Activated naive CD4-positive, alpha-beta T cell treated with anti-CD3 and anti-CD28 coated beads for 36 hours (primary cell): ENCODE measurements at regions of chr11 and their contacts with region 1.

Region 1: GRCh38 chr11:11841723-11842420 is at the start of gene USP47:
- DNase-seq: peak; percentile 94
- H3K4me3 Mint-ChIP-seq: no peak within 1 kb of the TSS
- H3K27ac Mint-ChIP-seq: no peak within 1 kb of the TSS
- H3K4me1 Mint-ChIP-seq: peaks cover 2% of the 10 kb centered on the region
- H3K27me3 Mint-ChIP-seq: peaks cover 5% of the 10 kb centered on the region
- total RNA-seq, gene USP47: 52.4 to 56.0 TPM

Region 2: GRCh38 chr11:10455637-10456487 is 1386.0 kb before region 1 on chr11:
- CTCF ChIA-PET with region 1: no interaction called
- intact Hi-C with region 1: loop called (anchors 5 kb)
- DNase-seq: peak; percentile 87
- H3K4me3 Mint-ChIP-seq: peak overlapping the region; percentile 82
- H3K27ac Mint-ChIP-seq: peak overlapping the region; percentile 93
- H3K4me1 Mint-ChIP-seq: peaks cover 85% of the 10 kb centered on the region
- H3K27me3 Mint-ChIP-seq: no peaks in the 10 kb centered on the region

Region 3: GRCh38 chr11:10857709-10858438 is 984.0 kb before region 1 on chr11 and contains the start of gene ZBED5:
- CTCF ChIA-PET with region 1: no interaction called
- intact Hi-C with region 1: loop called (anchors 2 kb)
- DNase-seq: peak; percentile 96
- H3K4me3 Mint-ChIP-seq: peak within 1 kb of the TSS; percentile 100
- H3K27ac Mint-ChIP-seq: peak within 1 kb of the TSS; percentile 100
- H3K4me1 Mint-ChIP-seq: peaks cover 46% of the 10 kb centered on the region
- H3K27me3 Mint-ChIP-seq: no peaks in the 10 kb centered on the region
- total RNA-seq, gene ZBED5: 50.4 to 52.4 TPM

Region 4: GRCh38 chr11:11787305-11788062 is 54.4 kb before region 1 on chr11:
- CTCF ChIA-PET with region 1: no interaction called
- intact Hi-C with region 1: no loop called
- DNase-seq: peak; percentile 83
- H3K4me3 Mint-ChIP-seq: no peak overlapping the region
- H3K27ac Mint-ChIP-seq: no peak overlapping the region
- H3K4me1 Mint-ChIP-seq: no peaks in the 10 kb centered on the region
- H3K27me3 Mint-ChIP-seq: peaks cover 3% of the 10 kb centered on the region

Region 5: DNA sequence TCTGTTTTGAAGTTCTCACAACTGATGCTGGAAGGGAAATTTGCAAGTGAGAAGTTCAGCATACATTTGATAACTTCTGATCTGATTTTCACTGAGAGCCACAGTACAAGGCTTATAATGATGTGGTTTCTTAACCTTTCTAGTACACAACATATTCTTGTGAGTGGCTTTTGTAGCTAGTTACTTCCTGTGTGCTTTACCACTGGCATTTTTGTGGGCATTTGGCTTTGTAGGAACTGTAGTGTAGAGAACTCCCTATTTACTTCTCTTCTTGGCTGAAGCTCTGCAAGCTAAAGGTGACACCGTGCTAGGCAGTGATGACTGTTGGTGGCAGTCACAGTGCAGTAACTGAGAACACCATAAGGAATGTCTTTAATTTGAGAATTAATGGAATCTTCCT is 14.8 kb after region 1 on chr11:
- CTCF ChIA-PET with region 1: interaction called, 13 read pairs
- intact Hi-C with region 1: loop called (anchors 1 kb)
- DNase-seq: peak; percentile 56
- H3K4me3 Mint-ChIP-seq: no peak overlapping the region
- H3K27ac Mint-ChIP-seq: peak overlapping the region; percentile 70
- H3K4me1 Mint-ChIP-seq: peaks cover 72% of the 10 kb centered on the region
- H3K27me3 Mint-ChIP-seq: no peaks in the 10 kb centered on the region

Region 6: GRCh38 chr11:12159351-12160099 is 317.7 kb after region 1 on chr11:
- CTCF ChIA-PET with region 1: no interaction called
- intact Hi-C with region 1: loop called (anchors 5 kb)
- DNase-seq: no peak
- H3K4me3 Mint-ChIP-seq: no peak overlapping the region
- H3K27ac Mint-ChIP-seq: no peak overlapping the region
- H3K4me1 Mint-ChIP-seq: peaks cover 42% of the 10 kb centered on the region
- H3K27me3 Mint-ChIP-seq: no peaks in the 10 kb centered on the region

Region 7: GRCh38 chr11:12485328-12485727 is 643.5 kb after region 1 on chr11:
- CTCF ChIA-PET with region 1: no interaction called
- intact Hi-C with region 1: no loop called
- DNase-seq: no peak
- H3K4me3 Mint-ChIP-seq: no peak overlapping the region
- H3K27ac Mint-ChIP-seq: no peak overlapping the region
- H3K4me1 Mint-ChIP-seq: no peaks in the 10 kb centered on the region
- H3K27me3 Mint-ChIP-seq: peaks cover 6% of the 10 kb centered on the region

Region 8: GRCh38 chr11:12673924-12674570 is 832.2 kb after region 1 on chr11 and contains the start of gene TEAD1:
- CTCF ChIA-PET with region 1: no interaction called
- intact Hi-C with region 1: loop called (anchors 10 kb)
- DNase-seq: peak; percentile 88
- H3K4me3 Mint-ChIP-seq: peak within 1 kb of the TSS; percentile 77
- H3K27ac Mint-ChIP-seq: no peak within 1 kb of the TSS
- H3K4me1 Mint-ChIP-seq: peaks cover 5% of the 10 kb centered on the region
- H3K27me3 Mint-ChIP-seq: peaks cover 72% of the 10 kb centered on the region
- total RNA-seq, gene TEAD1: 0.93 to 1.2 TPM